Activated T-helper 2 cell treated with anti-CD3 and anti-CD28 coated beads, Interferon-gamma antibody, Interleukin-2, Interleukin-4, amounts not matched to agents 10 μg/mL and 5 μg/mL and 100 μg/mL, durations not matched to agents 14 hours and 24 hours and 36 hours (primary cell): ENCODE measurements at regions of chr11 and their contacts with region 1.

Region 1: GRCh38 chr11:62705880-62706849 is 1.1 kb downstream of the BSCL2 start:
- DNase-seq: peak; percentile 89
- H3K4me3 Mint-ChIP-seq: peak overlapping the region; percentile 90
- H3K27ac Mint-ChIP-seq: peak overlapping the region; percentile 57
- H3K4me1 Mint-ChIP-seq: peaks cover 37% of the 10 kb centered on the region
- H3K27me3 Mint-ChIP-seq: no peaks in the 10 kb centered on the region

Region 2: GRCh38 chr11:62645956-62646824 is 60.0 kb before region 1 on chr11 and contains the start of gene GANAB:
- intact Hi-C with region 1: loop called (anchors 1 kb)
- DNase-seq: peak; percentile 98
- H3K4me3 Mint-ChIP-seq: peak within 1 kb of the TSS; percentile 98
- H3K27ac Mint-ChIP-seq: peak within 1 kb of the TSS; percentile 97
- H3K4me1 Mint-ChIP-seq: peaks cover 21% of the 10 kb centered on the region
- H3K27me3 Mint-ChIP-seq: no peaks in the 10 kb centered on the region
- total RNA-seq, gene GANAB: 274 and 279 TPM in 2 replicates

Region 3: GRCh38 chr11:62771144-62772021 is 65.2 kb after region 1 on chr11 and contains the start of gene TAF6L:
- intact Hi-C with region 1: loop called (anchors 1 kb)
- DNase-seq: peak; percentile 92
- H3K4me3 Mint-ChIP-seq: peak within 1 kb of the TSS; percentile 88
- H3K27ac Mint-ChIP-seq: peak within 1 kb of the TSS; percentile 92
- H3K4me1 Mint-ChIP-seq: peaks cover 13% of the 10 kb centered on the region
- H3K27me3 Mint-ChIP-seq: no peaks in the 10 kb centered on the region
- total RNA-seq, gene TAF6L: 17.6 and 21.0 TPM in 2 replicates

Region 4: DNA sequence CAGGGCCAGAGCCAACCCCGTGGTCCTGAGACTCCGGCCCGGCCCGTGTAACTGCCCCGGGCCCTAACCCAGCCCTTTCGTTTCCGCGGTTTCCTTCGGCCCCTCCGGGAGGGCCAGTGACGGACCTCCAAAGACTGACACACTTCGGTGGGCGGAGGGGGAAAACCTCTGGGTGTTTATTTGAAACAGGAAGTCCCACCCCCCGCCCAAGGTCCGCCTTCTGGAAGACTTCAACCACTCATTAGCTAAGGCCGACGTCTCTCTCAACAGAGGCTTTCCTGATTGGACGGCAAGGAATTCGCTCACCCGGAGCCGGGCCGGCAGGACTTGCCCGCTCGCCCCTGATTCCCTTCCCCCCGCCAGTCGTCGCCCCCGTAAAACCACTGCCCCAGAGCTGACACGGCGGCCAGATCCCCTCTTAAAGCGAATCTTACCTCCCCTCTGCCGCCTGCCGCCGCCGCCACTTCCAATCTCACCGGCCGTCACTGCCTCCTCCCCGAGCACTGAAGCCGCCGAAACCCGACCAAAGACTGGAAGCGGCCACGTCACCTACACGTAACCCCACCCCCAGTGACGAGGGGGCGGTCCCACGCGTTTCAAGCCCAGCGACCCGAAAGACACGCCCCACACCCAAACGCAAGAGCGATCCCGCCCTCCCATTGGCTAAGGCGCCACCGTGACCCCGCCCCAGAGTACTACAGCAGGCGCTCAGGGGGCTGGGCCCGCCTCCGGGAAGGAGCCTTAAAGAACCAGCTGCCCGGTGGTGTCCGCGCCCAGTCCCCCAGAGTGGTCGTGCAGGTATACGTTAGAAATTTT is 125.6 kb after region 1 on chr11 and contains the start of gene STX5:
- intact Hi-C with region 1: loop called (anchors 5 kb)
- DNase-seq: peak; percentile 99
- H3K4me3 Mint-ChIP-seq: peak within 1 kb of the TSS; percentile 94
- H3K27ac Mint-ChIP-seq: peak within 1 kb of the TSS; percentile 99
- H3K4me1 Mint-ChIP-seq: peaks cover 23% of the 10 kb centered on the region
- H3K27me3 Mint-ChIP-seq: no peaks in the 10 kb centered on the region
- total RNA-seq, gene STX5: 37.4 and 41.9 TPM in 2 replicates

Region 5: GRCh38 chr11:62880803-62881578 is 174.8 kb after region 1 on chr11 and contains the start of gene SLC3A2:
- intact Hi-C with region 1: loop called (anchors 1 kb)
- DNase-seq: peak; percentile 85
- H3K4me3 Mint-ChIP-seq: peak within 1 kb of the TSS; percentile 100
- H3K27ac Mint-ChIP-seq: peak within 1 kb of the TSS; percentile 100
- H3K4me1 Mint-ChIP-seq: peaks cover 55% of the 10 kb centered on the region
- H3K27me3 Mint-ChIP-seq: no peaks in the 10 kb centered on the region
- total RNA-seq, gene SLC3A2: 245 and 286 TPM in 2 replicates